ENCODE measurements at regions of chr10 and their contacts with region 1.

Region 1: GRCh38 chr10:95430231-95430951 is 130.8 kb downstream of the SORBS1 start:
- DNase-seq: peak; percentile 42
- H3K4me3 ChIP-seq: no peak overlapping the region
- H3K27ac ChIP-seq: no peak overlapping the region
- H3K4me1 ChIP-seq: no peaks in the 10 kb centered on the region
- H3K27me3 ChIP-seq: no peaks in the 10 kb centered on the region
- CTCF ChIP-seq: peak; percentile 92 to 98 (median 96)
- POLR2A ChIP-seq: no peak

Region 2: DNA sequence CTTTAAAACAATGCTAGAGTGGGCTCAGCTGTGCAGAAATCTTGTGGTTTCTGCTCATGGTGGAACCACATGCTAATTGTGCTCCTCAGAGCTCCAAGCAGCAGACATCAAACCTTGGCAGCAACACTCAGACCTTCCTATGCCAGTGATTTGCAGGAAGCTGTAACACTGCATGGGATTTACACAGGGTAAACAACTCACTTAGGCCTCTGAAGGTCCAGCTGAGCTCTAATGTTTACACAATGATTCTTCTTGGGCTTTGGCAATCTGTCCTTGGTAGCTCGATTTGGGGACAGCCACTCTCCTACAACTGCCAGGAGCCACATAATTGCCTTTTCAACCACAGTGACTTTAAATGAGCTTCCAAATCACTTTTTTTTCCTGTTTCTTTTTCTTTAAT is 41.9 kb before region 1 on chr10:
- intact Hi-C with region 1: no loop called
- DNase-seq: peak; percentile 65
- H3K4me3 ChIP-seq: no peak overlapping the region
- H3K27ac ChIP-seq: peak overlapping the region in 1 of 2 donors; percentile 24
- H3K4me1 ChIP-seq: peaks cover 5% of the 10 kb centered on the region
- H3K27me3 ChIP-seq: no peaks in the 10 kb centered on the region
- CTCF ChIP-seq: no peak
- POLR2A ChIP-seq: no peak

Region 3: DNA sequence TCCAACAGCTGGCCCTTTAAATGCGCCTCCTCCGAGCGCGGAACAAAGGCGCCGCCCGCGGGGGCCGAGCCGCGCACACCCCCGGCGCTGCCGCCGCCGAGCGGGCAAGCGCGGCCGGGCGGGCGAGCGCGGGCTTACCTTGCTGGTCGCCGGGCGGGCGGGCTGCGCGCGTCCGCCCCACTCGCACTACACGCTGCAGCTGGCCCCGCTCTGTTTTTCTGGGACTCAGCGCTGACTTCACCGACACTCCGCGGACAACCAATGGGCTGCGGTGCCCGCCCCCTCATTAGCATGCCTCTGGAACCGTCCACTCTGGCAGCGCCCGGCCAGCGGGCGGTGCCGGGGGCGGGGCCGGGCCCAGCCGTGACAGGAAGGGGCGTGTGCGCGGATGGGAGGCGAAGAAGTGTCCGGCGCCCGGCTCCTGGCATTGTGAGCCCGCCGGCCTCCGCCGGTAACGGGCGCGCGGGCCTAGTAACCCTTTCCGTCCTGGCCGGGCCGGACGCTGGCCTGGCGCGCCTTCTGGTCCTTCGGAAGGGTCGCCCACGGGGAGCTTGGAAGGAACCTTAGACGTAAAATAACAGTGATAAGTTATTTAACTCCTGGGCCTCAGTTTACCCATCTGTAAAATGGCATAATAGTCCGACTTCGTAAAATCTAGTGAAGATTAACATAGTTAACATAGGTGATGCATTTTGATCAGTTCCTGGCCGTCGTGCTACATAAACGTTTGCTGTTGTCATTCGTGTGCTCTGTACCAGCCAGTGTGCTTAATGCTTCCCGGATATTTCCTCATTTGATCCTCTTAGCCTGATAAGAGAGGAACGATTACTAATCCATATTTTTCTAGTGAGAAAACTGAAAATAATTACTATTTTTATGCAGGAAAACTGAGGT is 131.0 kb after region 1 on chr10 and contains the start of gene SORBS1:
- intact Hi-C with region 1: loop called (anchors 5 kb)
- DNase-seq: peak; percentile 97
- H3K4me3 ChIP-seq: peak within 1 kb of the TSS; percentile 72 to 80
- H3K27ac ChIP-seq: peak within 1 kb of the TSS; percentile 90 to 92
- H3K4me1 ChIP-seq: no peaks in the 10 kb centered on the region
- H3K27me3 ChIP-seq: no peaks in the 10 kb centered on the region
- CTCF ChIP-seq: peak in 1 of 4 experiments; percentile 21
- POLR2A ChIP-seq: peak; percentile 99
- total RNA-seq, gene SORBS1: 84.6 to 189 TPM

Measured in prostate gland (tissue), 2 donors.